ENCODE measurements at regions of chr19 and their contacts with region 1.

Region 1: DNA sequence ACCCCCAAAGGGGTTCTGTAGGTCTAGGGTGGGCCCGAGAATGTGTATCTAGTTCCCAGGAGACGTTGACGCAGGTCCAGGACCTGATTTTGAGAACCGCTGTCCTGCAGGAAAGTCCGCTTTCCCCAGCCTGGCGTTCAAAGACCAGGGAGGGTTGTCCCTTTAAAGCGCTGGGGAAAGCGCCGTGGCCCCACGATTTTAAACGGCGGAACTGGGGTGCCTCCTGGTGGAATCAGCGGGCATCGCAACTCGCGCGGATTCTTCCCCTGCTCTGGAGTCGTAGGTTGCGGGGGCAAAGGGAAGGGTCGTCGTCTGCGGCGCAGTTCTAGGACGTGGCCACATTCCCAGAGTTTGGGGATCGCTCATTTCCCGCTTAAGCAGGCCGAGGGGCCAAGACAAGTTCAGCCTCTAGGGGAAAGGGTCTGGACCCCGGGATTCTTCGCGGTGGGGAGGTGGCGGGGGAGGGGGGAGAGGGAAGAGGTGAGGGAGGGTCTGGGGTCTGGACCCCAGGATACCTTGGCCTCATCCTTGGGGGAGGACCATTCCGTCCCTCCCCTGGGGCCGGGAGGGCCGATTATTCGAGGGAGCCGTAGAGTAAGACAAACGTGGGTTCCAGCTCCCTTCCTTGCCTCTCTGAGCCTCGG is 7.7 kb downstream of the PNMA8B start:
- ATAC-seq: peak; percentile 66 to 89 (median 74)
- H3K4me3 ChIP-seq: peak overlapping the region; percentile 10 to 33 (median 25)
- H3K27ac ChIP-seq: peak overlapping the region in 1 of 2 donors; percentile 8
- H3K4me1 ChIP-seq: peaks cover 26 to 45% of the 10 kb centered on the region in 2 donors

Region 2: GRCh38 chr19:46378268-46378667 is 109.7 kb before region 1 on chr19:
- in situ Hi-C with region 1: loop called in 2 of 9 experiments (anchors 25 kb)
- ATAC-seq: peak in 3 of 8 experiments; percentile 4 to 43 (median 19)
- H3K4me3 ChIP-seq: no peak overlapping the region
- H3K27ac ChIP-seq: no peak overlapping the region
- H3K4me1 ChIP-seq: no peaks in the 10 kb centered on the region

Region 3: DNA sequence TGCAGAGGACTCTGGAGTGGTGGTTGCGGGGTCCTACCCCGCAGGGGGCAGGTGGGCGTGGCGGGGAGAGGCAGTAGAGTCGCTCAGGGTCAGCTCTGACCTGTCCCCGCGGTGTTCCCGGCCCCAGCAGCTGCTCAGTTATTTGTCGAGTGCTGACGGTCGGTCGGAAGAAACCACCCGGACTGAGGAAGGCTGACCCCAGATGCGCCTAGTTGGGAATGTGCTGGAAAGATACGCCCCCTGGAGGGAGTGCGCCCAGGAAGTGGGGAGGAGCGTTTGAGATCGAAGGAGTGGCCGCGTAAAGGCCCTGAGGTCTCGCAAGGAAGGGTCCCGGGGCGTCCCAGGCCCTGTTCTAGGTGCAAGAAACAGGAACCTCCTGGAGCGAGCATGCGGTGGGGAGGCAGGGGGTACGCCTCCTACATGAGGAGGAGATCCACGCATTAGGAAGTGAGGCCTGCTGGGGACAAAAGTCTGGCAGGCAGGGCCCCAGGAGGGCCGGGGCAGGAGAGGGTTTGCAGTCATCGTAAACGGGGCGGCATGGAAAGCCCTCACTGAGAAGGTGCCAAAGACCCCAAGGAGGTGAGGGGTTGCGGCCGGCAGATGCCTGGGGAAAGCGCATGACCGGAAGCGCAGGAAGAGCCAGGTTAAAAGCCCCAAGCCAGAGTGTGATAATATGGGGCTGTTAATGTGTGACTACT is 83.7 kb before region 1 on chr19:
- in situ Hi-C with region 1: loop called (anchors 5 to 25 kb)
- ATAC-seq: peak in 5 of 8 experiments; percentile 3 to 78 (median 76)
- H3K4me3 ChIP-seq: peak overlapping the region in 4 of 5 donors; percentile 3 to 17 (median 4)
- H3K27ac ChIP-seq: peak overlapping the region; percentile 63 to 78
- H3K4me1 ChIP-seq: peaks cover 28 to 53% of the 10 kb centered on the region in 2 donors

Region 4: DNA sequence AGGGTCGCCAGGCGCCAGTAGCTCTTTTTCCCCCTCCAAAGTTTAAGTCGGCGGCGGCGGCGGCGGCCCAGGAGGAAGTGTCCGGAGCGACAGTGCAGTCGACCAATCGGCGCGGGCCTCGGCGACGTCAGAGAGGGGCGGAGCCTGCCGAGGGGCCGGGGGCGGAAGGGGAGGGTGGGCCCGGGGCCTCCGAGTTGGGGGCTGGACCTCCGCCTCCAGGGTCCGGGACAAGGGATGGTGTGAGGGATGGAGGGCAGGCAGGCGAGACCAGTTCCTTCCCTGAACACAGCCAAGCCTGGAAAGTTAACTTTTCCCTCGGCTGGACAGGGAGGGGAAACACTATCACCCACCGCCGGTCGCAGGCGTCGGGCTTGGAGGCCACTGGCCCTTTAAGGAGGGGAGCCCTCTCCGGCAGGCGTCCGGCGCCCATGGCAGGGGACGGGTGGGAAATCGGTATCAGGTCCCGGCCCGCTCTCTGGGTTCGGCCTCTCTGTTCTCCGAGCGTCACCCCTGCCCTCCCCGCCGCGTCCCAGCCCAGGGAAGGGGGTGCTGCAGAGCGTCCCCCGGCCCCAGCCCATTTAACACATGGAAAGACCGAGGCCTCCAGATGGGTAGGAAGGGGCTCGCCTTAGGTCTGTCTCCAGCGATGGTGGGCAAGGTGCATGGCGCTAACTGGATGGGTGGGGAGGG is 229.3 kb after region 1 on chr19 and contains the start of gene PRKD2:
- in situ Hi-C with region 1: no loop called
- ATAC-seq: peak; percentile 64 to 85 (median 84)
- H3K4me3 ChIP-seq: peak within 1 kb of the TSS; percentile 57 to 96 (median 64)
- H3K27ac ChIP-seq: peak within 1 kb of the TSS; percentile 11 to 18
- H3K4me1 ChIP-seq: peaks cover 0 to 9% of the 10 kb centered on the region in 2 donors
- total RNA-seq, gene PRKD2: 6.5 to 33.2 (median 12.7) TPM